ENCODE measurements at regions of chr17 and their contacts with region 1.

Region 1: DNA sequence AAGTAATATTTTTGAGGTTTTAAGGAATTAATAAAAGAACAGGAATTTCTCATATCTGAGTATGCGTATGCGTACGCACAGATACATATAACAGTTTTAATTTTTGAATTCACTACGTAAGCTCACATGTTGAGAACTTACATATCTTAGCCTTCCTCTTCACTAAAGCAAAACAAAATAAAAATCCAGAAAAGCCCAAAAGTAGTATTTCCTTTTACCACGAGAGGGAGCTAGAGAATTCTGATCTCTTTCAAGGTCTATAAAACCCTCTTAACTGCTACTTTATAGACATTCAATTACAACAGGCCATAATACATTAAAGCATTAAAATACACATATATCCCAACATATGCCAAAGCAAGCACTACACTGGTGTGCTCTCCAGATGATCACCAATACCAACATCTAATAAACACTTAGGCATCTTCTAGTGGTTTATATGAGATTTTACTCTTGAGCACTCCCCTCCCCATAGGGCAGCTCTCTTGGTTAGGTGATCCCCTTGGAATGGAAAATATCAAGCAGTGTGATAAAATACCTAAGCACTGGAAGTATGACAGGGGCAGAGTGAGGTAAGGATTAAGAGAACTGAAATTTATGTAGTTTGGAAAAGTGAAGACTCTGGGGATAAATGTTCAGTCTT is 94.0 kb downstream of the SKAP1 start:
- DNase-seq: peak in 2 of 35 experiments; percentile 12 to 79
- ATAC-seq: peak; percentile 48 to 60 (median 57)
- H3K4me3 ChIP-seq: no peak overlapping the region
- H3K4me3 Mint-ChIP-seq: no peak overlapping the region
- H3K27ac ChIP-seq: no peak overlapping the region
- H3K27ac Mint-ChIP-seq: peak overlapping the region in 1 of 2 donors; percentile 61
- H3K4me1 ChIP-seq: no peaks in the 10 kb centered on the region
- H3K4me1 Mint-ChIP-seq: peaks cover 6 to 9% (median 7%) of the 10 kb centered on the region in 3 donors
- H3K27me3 ChIP-seq: no peaks in the 10 kb centered on the region
- H3K27me3 Mint-ChIP-seq: no peaks in the 10 kb centered on the region

Region 2: GRCh38 chr17:48127356-48128051 is 208.5 kb before region 1 on chr17:
- CTCF ChIA-PET with region 1: no interaction called
- POLR2A ChIA-PET with region 1: interaction called in 1 of 2 experiments, 10 read pairs
- DNase-seq: no peak
- ATAC-seq: no peak
- H3K4me3 ChIP-seq: no peak overlapping the region
- H3K4me3 Mint-ChIP-seq: no peak overlapping the region
- H3K27ac ChIP-seq: no peak overlapping the region
- H3K27ac Mint-ChIP-seq: peak overlapping the region in 1 of 2 donors; percentile 48
- H3K4me1 ChIP-seq: no peaks in the 10 kb centered on the region
- H3K4me1 Mint-ChIP-seq: peaks cover 0 to 3% (median 0%) of the 10 kb centered on the region in 3 donors
- H3K27me3 ChIP-seq: no peaks in the 10 kb centered on the region
- H3K27me3 Mint-ChIP-seq: no peaks in the 10 kb centered on the region

Region 3: GRCh38 chr17:48246612-48247011 is 89.4 kb before region 1 on chr17:
- CTCF ChIA-PET with region 1: no interaction called
- POLR2A ChIA-PET with region 1: no interaction called
- DNase-seq: no peak
- ATAC-seq: no peak
- H3K4me3 ChIP-seq: no peak overlapping the region
- H3K4me3 Mint-ChIP-seq: no peak overlapping the region
- H3K27ac ChIP-seq: no peak overlapping the region
- H3K27ac Mint-ChIP-seq: peak overlapping the region in 1 of 2 donors; percentile 11
- H3K4me1 ChIP-seq: peaks cover 8 to 10% of the 10 kb centered on the region in 2 experiments
- H3K4me1 Mint-ChIP-seq: peaks cover 51 to 58% (median 53%) of the 10 kb centered on the region in 3 donors
- H3K27me3 ChIP-seq: no peaks in the 10 kb centered on the region
- H3K27me3 Mint-ChIP-seq: no peaks in the 10 kb centered on the region

Region 4: DNA sequence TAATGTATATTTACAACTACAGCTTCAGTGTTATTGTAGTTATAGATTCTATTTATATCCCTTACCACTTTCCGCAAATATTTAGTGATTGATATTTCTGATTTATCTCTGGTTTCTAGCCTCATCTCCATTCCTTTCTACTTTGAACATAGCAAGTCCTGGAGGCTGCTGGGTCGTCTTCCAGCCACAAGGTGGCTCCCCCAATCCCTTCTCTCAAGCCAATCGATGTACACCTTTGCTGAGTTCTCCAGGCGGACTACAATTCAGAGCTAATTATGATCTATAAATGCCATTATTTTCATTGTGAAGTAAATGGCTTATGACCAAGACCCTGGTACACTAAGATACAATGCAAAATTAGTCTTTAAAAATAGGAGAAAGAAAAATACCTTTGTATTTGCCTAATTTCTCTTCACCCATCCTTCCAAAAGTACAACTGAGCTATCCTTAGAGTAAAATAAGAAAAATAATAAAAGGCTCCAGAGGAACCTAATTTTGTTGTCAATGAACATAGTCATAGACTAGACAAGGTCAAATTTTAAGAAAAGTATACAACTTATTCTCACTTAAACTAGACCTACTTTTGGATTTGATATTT is 28.1 kb before region 1 on chr17:
- CTCF ChIA-PET with region 1: interaction called, 3 to 20 read pairs
- POLR2A ChIA-PET with region 1: no interaction called
- DNase-seq: peak; percentile 8 to 71 (median 39)
- ATAC-seq: peak; percentile 61 to 81 (median 78)
- H3K4me3 ChIP-seq: no peak overlapping the region
- H3K4me3 Mint-ChIP-seq: no peak overlapping the region
- H3K27ac ChIP-seq: no peak overlapping the region
- H3K27ac Mint-ChIP-seq: no peak overlapping the region
- H3K4me1 ChIP-seq: no peaks in the 10 kb centered on the region
- H3K4me1 Mint-ChIP-seq: peaks cover 12 to 37% (median 26%) of the 10 kb centered on the region in 3 donors
- H3K27me3 ChIP-seq: no peaks in the 10 kb centered on the region
- H3K27me3 Mint-ChIP-seq: no peaks in the 10 kb centered on the region

Region 5: DNA sequence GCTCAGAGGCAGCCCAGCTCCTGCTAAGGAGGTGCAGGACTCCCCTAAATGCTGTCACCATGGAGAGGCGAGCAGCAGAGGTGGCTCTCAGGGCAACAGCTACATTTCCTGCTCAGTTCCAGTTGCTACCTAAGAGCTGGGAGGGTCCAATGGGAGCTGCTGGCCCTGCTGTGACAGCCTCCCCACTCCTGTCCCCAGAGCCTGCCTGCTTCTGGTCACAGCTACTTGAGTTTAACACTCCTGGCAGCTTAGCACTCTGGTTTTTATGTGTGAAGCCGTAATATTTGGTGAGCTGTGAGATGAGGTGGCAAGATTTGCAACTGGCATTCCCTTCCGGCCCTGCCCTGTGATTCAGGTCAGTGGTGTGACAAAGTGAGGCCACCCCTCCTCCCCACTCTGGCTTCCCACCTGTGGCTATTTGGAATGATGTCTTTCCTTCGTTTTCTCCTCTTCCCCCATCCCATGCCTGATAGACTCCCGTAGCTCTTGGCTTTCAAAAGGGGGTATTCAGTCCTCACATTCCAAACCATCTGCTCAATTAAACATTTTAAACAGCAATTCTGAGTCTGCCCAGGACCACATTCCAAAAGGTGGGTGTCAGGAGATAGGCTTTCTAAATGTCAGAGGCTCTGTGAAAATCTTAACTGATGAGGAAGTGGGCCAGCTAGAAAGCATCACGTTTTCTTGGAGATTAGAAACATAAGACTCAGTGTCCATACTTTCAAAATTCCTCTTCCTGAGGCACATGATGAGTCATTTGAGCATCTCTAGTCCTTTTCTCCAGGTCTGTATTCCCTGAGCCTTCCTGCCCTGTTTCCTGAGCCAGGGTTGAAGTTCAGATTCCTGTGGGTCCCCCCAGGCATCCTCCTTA is 136.7 kb after region 1 on chr17:
- CTCF ChIA-PET with region 1: interaction called in 1 of 2 experiments, 10 read pairs
- POLR2A ChIA-PET with region 1: no interaction called
- DNase-seq: peak in 13 of 35 experiments; percentile 7 to 64 (median 15)
- ATAC-seq: peak in 2 of 4 experiments; percentile 35 to 48
- H3K4me3 ChIP-seq: no peak overlapping the region
- H3K4me3 Mint-ChIP-seq: no peak overlapping the region
- H3K27ac ChIP-seq: peak overlapping the region; percentile 35
- H3K27ac Mint-ChIP-seq: no peak overlapping the region
- H3K4me1 ChIP-seq: peaks cover 0 to 24% of the 10 kb centered on the region in 2 experiments
- H3K4me1 Mint-ChIP-seq: peaks cover 0 to 8% (median 0%) of the 10 kb centered on the region in 3 donors
- H3K27me3 ChIP-seq: no peaks in the 10 kb centered on the region
- H3K27me3 Mint-ChIP-seq: no peaks in the 10 kb centered on the region

Region 6: GRCh38 chr17:48603959-48604769 is 268.2 kb after region 1 on chr17:
- CTCF ChIA-PET with region 1: interaction called in 1 of 2 experiments, 11 read pairs
- POLR2A ChIA-PET with region 1: no interaction called
- DNase-seq: no peak
- ATAC-seq: no peak
- H3K4me3 ChIP-seq: no peak overlapping the region
- H3K4me3 Mint-ChIP-seq: peak overlapping the region in 1 of 3 donors; percentile 8
- H3K27ac ChIP-seq: no peak overlapping the region
- H3K27ac Mint-ChIP-seq: peak overlapping the region in 1 of 2 donors; percentile 69
- H3K4me1 ChIP-seq: peaks cover 4 to 36% of the 10 kb centered on the region in 2 experiments
- H3K4me1 Mint-ChIP-seq: peaks cover 4 to 21% (median 12%) of the 10 kb centered on the region in 3 donors
- H3K27me3 ChIP-seq: peaks cover 31 to 88% of the 10 kb centered on the region in 2 experiments
- H3K27me3 Mint-ChIP-seq: peaks cover 84 to 91% of the 10 kb centered on the region in 2 donors